ENCODE measurements at regions of chr4 and their contacts with region 1.

Region 1: GRCh38 chr4:30605616-30606190 is 114.5 kb upstream of the PCDH7 start:
- DNase-seq: peak; percentile 90
- H3K4me3 ChIP-seq: no peak overlapping the region
- H3K27ac ChIP-seq: peak overlapping the region; percentile 97
- H3K4me1 ChIP-seq: peaks cover 33% of the 10 kb centered on the region
- H3K27me3 ChIP-seq: no peaks in the 10 kb centered on the region
- CTCF ChIP-seq: no peak

Region 2: DNA sequence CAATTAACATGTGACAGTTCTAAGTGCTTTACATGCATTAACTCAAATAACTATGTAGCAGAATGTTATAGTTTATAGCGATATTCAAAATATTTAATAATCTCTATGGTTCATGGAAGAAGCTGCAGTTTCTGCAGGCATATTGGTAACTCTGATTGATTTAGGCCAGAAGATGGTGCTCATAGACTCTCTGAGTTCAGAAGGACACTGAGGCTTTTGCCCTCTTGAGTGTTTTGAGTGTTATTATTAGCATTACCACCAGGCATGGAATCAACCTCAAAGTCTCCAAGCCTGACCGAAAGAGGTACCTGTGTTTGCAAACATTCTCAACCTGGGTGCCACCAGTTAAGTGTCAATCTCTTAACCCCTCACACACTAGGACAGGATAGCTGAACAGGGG is 677.8 kb before region 1 on chr4:
- CTCF ChIA-PET with region 1: no interaction called
- POLR2A ChIA-PET with region 1: no interaction called
- intact Hi-C with region 1: loop called (anchors 2 kb)
- DNase-seq: peak; percentile 49
- H3K4me3 ChIP-seq: no peak overlapping the region
- H3K27ac ChIP-seq: no peak overlapping the region
- H3K4me1 ChIP-seq: peaks cover 17% of the 10 kb centered on the region
- H3K27me3 ChIP-seq: no peaks in the 10 kb centered on the region
- CTCF ChIP-seq: peak; percentile 42

Region 3: DNA sequence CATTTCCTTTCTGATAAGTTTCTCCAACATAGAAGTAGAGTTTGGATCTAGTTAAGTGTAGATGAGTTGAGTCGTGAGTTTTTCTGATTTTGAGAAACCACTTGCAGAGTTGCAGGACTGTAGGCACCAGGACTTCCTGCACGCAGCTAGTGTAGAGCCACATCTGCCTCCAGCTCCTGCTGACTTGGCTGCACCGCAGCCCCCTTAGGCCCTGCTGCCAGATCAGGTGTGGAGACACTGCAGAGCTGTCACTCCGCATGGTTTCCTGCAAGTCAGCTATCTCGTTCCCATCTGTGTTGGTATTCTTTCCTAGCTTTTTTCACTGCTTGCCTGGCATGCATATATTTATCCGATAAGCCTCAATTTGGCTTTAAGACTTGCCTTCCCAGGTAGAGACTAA is 163.4 kb after region 1 on chr4:
- CTCF ChIA-PET with region 1: no interaction called
- POLR2A ChIA-PET with region 1: no interaction called
- intact Hi-C with region 1: loop called (anchors 5 kb)
- DNase-seq: peak; percentile 32
- H3K4me3 ChIP-seq: no peak overlapping the region
- H3K27ac ChIP-seq: peak overlapping the region; percentile 57
- H3K4me1 ChIP-seq: peaks cover 84% of the 10 kb centered on the region
- H3K27me3 ChIP-seq: no peaks in the 10 kb centered on the region
- CTCF ChIP-seq: no peak

Region 4: GRCh38 chr4:30957706-30958105 is 352.0 kb after region 1 on chr4:
- CTCF ChIA-PET with region 1: no interaction called
- POLR2A ChIA-PET with region 1: no interaction called
- intact Hi-C with region 1: loop called (anchors 1 kb)
- DNase-seq: no peak
- H3K4me3 ChIP-seq: no peak overlapping the region
- H3K27ac ChIP-seq: peak overlapping the region; percentile 96
- H3K4me1 ChIP-seq: peaks cover 86% of the 10 kb centered on the region
- H3K27me3 ChIP-seq: no peaks in the 10 kb centered on the region
- CTCF ChIP-seq: no peak

Measured in A673 (cell line).